ENCODE measurements at regions of chr17 and their contacts with region 1.

Region 1: DNA sequence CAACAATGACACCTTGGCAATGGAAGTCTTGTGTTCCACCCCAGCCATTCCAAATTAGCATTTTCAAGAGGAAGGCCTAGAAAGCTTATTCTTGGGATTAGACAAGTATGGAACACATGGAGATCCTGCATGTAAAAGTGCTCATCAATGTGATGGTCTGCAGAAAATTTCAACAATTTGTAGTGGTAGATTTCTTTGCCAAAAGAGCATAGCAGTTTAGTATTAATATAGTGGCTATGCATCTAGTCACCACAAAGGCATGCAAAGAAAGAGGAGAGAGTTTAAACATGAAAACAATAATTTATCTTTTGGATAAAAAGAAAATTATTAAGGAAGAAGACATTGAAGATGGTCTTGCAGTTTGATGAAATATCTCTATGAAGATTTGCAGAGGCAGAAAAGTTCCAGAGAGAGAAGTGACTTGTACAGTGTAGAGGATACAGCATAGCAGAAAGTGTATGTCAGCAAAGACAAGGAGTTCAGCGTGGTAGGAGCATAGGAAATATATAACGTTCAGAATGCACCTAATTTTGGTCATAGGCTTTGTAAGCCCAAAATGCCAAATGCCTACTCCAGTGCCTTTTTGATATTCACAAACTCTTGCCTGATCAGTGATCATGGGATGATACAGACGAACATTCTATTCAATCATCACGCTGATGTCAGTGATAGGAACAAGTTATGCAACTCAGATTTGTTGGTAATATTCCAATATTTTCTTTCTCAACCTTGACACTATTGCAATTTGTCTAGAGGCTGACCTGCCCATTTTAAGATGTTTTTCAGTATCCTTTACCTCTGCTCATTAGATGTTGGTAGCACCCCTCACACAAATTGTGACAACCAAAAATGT is 727.9 kb upstream of the SOX9 start:
- DNase-seq: peak; percentile 74
- ATAC-seq: peak; percentile 93
- H3K4me3 ChIP-seq: no peak overlapping the region
- H3K27ac ChIP-seq: no peak overlapping the region
- H3K4me1 ChIP-seq: peaks cover 9% of the 10 kb centered on the region; the same call in 1 of the 2 replicates
- H3K27me3 ChIP-seq: no peaks in the 10 kb centered on the region
- CTCF ChIP-seq: no peak
- POLR2A ChIP-seq: no peak
- RAD21 ChIP-seq: no peak

Region 2: GRCh38 chr17:70752972-70753467 is 639.9 kb before region 1 on chr17:
- CTCF ChIA-PET with region 1: interaction called, 10 read pairs
- POLR2A ChIA-PET with region 1: no interaction called
- dilution Hi-C with region 1: no loop called
- in situ Hi-C with region 1: no loop called
- intact Hi-C with region 1: no loop called
- DNase-seq: no peak
- ATAC-seq: no peak
- H3K4me3 ChIP-seq: no peak overlapping the region
- H3K27ac ChIP-seq: no peak overlapping the region
- H3K4me1 ChIP-seq: no peaks in the 10 kb centered on the region
- H3K27me3 ChIP-seq: no peaks in the 10 kb centered on the region
- CTCF ChIP-seq: no peak
- POLR2A ChIP-seq: no peak
- RAD21 ChIP-seq: no peak

Region 3: GRCh38 chr17:71304498-71305158 is 88.3 kb before region 1 on chr17:
- CTCF ChIA-PET with region 1: no interaction called
- POLR2A ChIA-PET with region 1: no interaction called
- dilution Hi-C with region 1: no loop called
- in situ Hi-C with region 1: no loop called
- intact Hi-C with region 1: no loop called
- DNase-seq: no peak
- ATAC-seq: no peak
- H3K4me3 ChIP-seq: no peak overlapping the region
- H3K27ac ChIP-seq: no peak overlapping the region
- H3K4me1 ChIP-seq: no peaks in the 10 kb centered on the region
- H3K27me3 ChIP-seq: no peaks in the 10 kb centered on the region
- CTCF ChIP-seq: no peak
- POLR2A ChIP-seq: no peak
- RAD21 ChIP-seq: no peak

Region 4: DNA sequence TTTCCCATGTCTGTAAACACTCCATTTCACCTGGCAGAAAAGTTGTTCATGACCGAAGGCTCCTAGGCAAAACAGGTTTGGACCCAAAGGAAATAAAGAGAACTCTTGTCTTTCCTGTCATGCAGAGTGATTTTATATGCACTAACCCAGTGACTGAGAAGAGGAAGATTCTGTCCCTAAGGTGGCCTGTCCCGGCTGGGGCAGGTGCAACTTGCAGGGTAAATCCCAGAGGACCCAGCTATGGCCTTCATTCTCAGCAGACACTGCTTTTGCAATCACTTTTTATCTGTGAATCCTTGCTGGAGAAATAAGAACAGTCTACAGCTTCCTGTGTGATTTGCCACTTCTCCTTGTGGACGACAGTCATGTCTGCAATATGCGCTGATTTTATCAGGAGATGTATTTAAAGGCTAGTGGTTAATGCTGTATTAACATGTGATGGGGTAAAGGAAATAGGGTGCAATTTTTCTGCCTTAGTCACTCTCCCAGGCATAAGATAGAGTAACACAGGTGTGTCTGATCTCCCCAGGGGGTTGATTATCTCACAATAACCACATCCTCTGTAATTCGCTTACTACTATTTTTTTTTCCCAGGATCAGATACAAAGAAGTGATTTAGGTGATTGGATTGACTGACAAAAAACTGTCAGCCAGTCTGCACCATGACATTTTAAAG is 31.1 kb after region 1 on chr17:
- CTCF ChIA-PET with region 1: interaction called, 11 read pairs
- POLR2A ChIA-PET with region 1: no interaction called
- dilution Hi-C with region 1: no loop called
- in situ Hi-C with region 1: no loop called
- intact Hi-C with region 1: no loop called
- DNase-seq: peak; percentile 76
- ATAC-seq: no peak
- H3K4me3 ChIP-seq: no peak overlapping the region
- H3K27ac ChIP-seq: no peak overlapping the region
- H3K4me1 ChIP-seq: peaks cover 2% of the 10 kb centered on the region; the same call in 1 of the 2 replicates
- H3K27me3 ChIP-seq: no peaks in the 10 kb centered on the region
- CTCF ChIP-seq: no peak
- POLR2A ChIP-seq: no peak
- RAD21 ChIP-seq: no peak

Measured in IMR-90 (cell line).